Ovary (tissue), 10 donors: ENCODE measurements at regions of chr1 and their contacts with region 1.

Region 1: GRCh38 chr1:184163674-184164465 is 112.3 kb downstream of the TSEN15 start:
- DNase-seq: no peak
- H3K4me3 ChIP-seq: no peak overlapping the region
- H3K27ac ChIP-seq: no peak overlapping the region
- H3K4me1 ChIP-seq: no peaks in the 10 kb centered on the region
- H3K27me3 ChIP-seq: no peaks in the 10 kb centered on the region
- CTCF ChIP-seq: no peak
- EP300 ChIP-seq: no peak
- POLR2A ChIP-seq: no peak

Region 2: GRCh38 chr1:183537405-183537804 is 626.5 kb before region 1 on chr1:
- intact Hi-C with region 1: no loop called
- DNase-seq: no peak
- H3K4me3 ChIP-seq: no peak overlapping the region
- H3K27ac ChIP-seq: no peak overlapping the region
- H3K4me1 ChIP-seq: no peaks in the 10 kb centered on the region
- H3K27me3 ChIP-seq: no peaks in the 10 kb centered on the region
- CTCF ChIP-seq: no peak
- EP300 ChIP-seq: no peak
- POLR2A ChIP-seq: no peak

Region 3: DNA sequence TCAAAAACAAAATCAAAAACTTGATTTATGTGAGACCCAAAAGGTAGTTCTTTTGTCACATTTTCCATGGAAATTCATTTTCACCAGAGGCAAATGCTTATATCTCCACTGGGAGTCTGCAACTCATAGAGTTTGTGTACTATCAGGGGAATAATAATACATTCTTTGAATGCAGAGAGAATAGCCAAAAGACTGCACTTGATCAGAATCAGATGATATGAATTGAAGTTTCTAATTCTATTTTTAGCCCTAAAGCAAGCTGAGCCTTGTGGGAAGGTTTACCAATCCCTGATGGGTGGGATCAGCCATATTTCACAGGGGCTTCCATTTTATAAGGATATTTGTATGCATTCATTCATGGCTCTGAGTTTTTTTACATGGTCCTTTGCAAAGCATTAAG is 62.7 kb before region 1 on chr1:
- intact Hi-C with region 1: no loop called
- DNase-seq: no peak
- H3K4me3 ChIP-seq: no peak overlapping the region
- H3K27ac ChIP-seq: no peak overlapping the region
- H3K4me1 ChIP-seq: no peaks in the 10 kb centered on the region
- H3K27me3 ChIP-seq: no peaks in the 10 kb centered on the region
- CTCF ChIP-seq: no peak
- EP300 ChIP-seq: no peak
- POLR2A ChIP-seq: no peak

Region 4: DNA sequence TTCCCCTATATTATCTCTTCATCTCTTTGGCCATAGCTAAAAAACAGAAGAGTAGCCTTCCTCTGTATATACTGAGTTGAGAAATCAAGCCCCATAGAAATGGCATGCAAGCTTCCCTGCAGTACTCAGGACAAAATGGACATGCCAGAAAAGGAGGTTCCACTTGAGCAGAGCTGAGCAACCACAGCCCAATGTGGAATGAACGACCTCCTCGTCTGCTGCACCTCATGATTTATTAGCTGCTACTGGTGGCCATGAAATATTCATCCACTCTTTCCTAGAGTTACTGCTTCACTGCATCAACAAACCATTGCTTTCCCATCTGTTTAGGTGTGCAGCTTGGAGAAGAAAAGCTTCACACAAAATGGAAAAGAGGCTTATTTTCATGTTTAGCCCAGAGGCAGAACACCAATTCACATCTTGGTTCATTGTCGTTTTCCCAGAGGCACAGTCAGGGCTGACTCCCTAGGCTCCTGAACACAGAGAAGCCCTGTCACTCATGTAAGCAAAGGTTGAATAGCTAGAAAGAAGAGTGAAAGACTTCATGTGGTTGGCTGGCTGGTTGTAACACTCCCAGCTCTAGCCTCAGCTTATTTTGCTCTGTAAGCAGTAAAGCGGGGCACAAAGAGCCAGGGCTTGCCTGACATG is 35.7 kb after region 1 on chr1:
- intact Hi-C with region 1: loop called in 1 of 4 experiments (anchors 5 kb)
- DNase-seq: no peak
- H3K4me3 ChIP-seq: no peak overlapping the region
- H3K27ac ChIP-seq: no peak overlapping the region
- H3K4me1 ChIP-seq: no peaks in the 10 kb centered on the region
- H3K27me3 ChIP-seq: no peaks in the 10 kb centered on the region
- CTCF ChIP-seq: no peak
- EP300 ChIP-seq: no peak
- POLR2A ChIP-seq: no peak